T-cell (primary cell): ENCODE measurements at regions of chr9 and their contacts with region 1.

Region 1: DNA sequence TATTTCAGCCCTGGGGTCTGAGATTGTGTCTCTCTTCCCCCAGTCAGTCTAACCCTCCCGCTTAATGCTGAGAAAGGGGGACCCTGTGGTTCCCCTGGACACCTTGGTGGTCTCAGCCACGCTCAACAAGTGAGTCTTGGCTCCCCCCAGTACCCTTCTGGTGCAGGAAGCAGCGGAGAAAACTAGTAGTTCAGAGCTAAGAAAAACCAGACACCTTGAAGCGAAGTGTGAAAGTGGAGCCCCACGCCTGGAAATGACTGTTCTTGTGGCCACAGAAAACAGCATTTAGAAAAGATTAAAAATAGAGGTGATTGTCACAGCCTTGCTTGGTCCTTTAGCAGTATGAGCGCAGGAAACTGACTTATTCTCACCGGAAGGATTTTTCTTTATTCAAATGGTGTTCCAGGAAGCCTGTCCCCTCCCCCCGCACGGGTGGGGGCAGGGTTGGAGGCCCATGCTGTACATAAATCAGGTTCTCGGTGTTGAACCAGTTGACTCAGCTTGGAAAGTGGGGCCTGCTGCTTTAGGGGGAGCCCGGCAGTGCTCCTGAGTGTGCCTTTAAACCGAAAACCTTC is 8.1 kb downstream of the ARPC5L start:
- DNase-seq: peak; percentile 35 to 83 (median 75)
- ATAC-seq: peak; percentile 37 to 49 (median 41)
- H3K4me3 ChIP-seq: peak overlapping the region; percentile 91 to 92
- H3K4me3 Mint-ChIP-seq: peak overlapping the region; percentile 85 to 91 (median 90)
- H3K27ac ChIP-seq: peak overlapping the region; percentile 91
- H3K27ac Mint-ChIP-seq: peak overlapping the region; percentile 91 to 95
- H3K4me1 ChIP-seq: peaks cover 20 to 68% of the 10 kb centered on the region in 2 experiments
- H3K4me1 Mint-ChIP-seq: peaks cover 59 to 64% (median 59%) of the 10 kb centered on the region in 3 donors
- H3K27me3 ChIP-seq: no peaks in the 10 kb centered on the region
- H3K27me3 Mint-ChIP-seq: no peaks in the 10 kb centered on the region

Region 2: DNA sequence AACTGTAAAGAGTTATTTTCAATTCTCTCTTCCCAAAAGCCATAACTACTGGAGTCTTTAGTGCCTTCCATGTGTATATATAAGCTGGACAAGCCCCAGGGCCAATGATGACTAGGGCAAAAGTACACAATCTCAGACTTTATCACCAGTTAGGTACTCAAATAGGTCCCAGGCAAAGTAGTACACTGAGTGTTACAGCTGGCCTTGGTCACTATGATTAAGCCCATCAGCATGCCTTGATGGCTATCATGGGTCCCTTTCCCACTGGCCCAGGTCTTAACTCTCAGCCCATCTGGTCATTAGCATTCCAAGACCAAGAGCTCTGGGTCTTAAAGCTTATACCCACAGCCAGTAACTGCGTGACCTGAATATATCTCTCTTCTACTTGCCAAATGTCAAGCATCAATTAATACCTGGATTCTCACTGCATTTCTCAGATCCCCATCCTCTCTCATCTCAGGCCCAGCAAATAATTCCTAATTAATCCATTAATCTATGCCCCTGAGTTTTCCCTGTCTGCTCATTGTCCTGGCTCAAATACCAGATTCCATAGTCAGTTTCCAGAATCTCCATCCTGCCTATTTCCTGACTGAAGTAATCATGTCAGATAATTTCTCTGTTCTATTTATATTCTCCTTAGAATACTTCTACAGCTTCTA is 161.3 kb before region 1 on chr9:
- CTCF ChIA-PET with region 1: no interaction called
- POLR2A ChIA-PET with region 1: no interaction called
- DNase-seq: no peak
- ATAC-seq: no peak
- H3K4me3 ChIP-seq: no peak overlapping the region
- H3K4me3 Mint-ChIP-seq: no peak overlapping the region
- H3K27ac ChIP-seq: no peak overlapping the region
- H3K27ac Mint-ChIP-seq: no peak overlapping the region
- H3K4me1 ChIP-seq: no peaks in the 10 kb centered on the region
- H3K4me1 Mint-ChIP-seq: peaks cover 0 to 1% (median 0%) of the 10 kb centered on the region in 3 donors
- H3K27me3 ChIP-seq: peaks cover 0 to 6% of the 10 kb centered on the region in 2 experiments
- H3K27me3 Mint-ChIP-seq: peaks cover 16 to 18% of the 10 kb centered on the region in 2 donors

Region 3: DNA sequence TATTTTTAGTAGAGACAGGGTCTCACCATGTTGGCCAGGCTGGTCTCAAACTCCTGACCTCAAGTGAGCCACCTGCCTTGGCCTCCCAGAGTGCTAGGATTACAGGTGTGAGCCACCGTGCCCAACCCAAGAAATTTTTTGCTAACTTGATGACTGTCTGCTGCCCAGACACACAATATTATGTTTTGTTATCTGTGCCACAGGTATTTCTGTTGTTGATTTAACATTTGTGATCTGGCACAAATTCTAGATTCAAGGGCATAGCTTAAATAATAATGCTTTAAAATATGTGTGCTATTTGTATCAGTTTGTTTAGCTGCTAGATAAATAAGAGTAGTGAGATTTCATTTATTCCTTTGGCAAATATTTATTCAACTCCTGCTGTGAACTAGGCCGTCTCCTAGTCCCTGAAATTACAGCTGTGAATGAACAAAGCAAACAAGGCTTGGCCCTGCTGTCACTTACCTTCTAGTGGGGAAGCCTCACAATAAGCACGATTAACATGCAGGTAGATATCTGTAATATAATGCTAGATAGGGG is 426.8 kb after region 1 on chr9:
- CTCF ChIA-PET with region 1: no interaction called
- POLR2A ChIA-PET with region 1: interaction called in 1 of 2 experiments, 10 read pairs
- DNase-seq: no peak
- ATAC-seq: no peak
- H3K4me3 ChIP-seq: no peak overlapping the region
- H3K4me3 Mint-ChIP-seq: no peak overlapping the region
- H3K27ac ChIP-seq: no peak overlapping the region
- H3K27ac Mint-ChIP-seq: peak overlapping the region in 1 of 2 donors; percentile 49
- H3K4me1 ChIP-seq: no peaks in the 10 kb centered on the region
- H3K4me1 Mint-ChIP-seq: peaks cover 11 to 20% (median 15%) of the 10 kb centered on the region in 3 donors
- H3K27me3 ChIP-seq: no peaks in the 10 kb centered on the region
- H3K27me3 Mint-ChIP-seq: no peaks in the 10 kb centered on the region